HAP-1 (cell line): ENCODE measurements at regions of chr4 and their contacts with region 1.

Region 1: GRCh38 chr4:122922877-122923511 is 597 bp upstream of the NUDT6 start:
- DNase-seq: peak; percentile 92 to 93
- H3K4me3 ChIP-seq: peak overlapping the region; percentile 63
- H3K4me1 ChIP-seq: peaks cover 9% of the 10 kb centered on the region
- H3K27me3 ChIP-seq: no peaks in the 10 kb centered on the region

Region 2: GRCh38 chr4:122086338-122087065 is 836.5 kb before region 1 on chr4:
- in situ Hi-C with region 1: no loop called
- DNase-seq: no peak
- H3K4me3 ChIP-seq: no peak overlapping the region
- H3K4me1 ChIP-seq: peaks cover 6% of the 10 kb centered on the region
- H3K27me3 ChIP-seq: no peaks in the 10 kb centered on the region

Region 3: GRCh38 chr4:122602277-122603142 is 320.5 kb before region 1 on chr4:
- in situ Hi-C with region 1: loop called (anchors 10 kb)
- DNase-seq: peak; percentile 17 to 42
- H3K4me3 ChIP-seq: no peak overlapping the region
- H3K4me1 ChIP-seq: no peaks in the 10 kb centered on the region
- H3K27me3 ChIP-seq: peaks cover 7% of the 10 kb centered on the region; the same call in 1 of the 2 replicates

Region 4: GRCh38 chr4:122749704-122750454 is 173.1 kb before region 1 on chr4:
- in situ Hi-C with region 1: loop called (anchors 5 kb)
- DNase-seq: no peak
- H3K4me3 ChIP-seq: no peak overlapping the region
- H3K4me1 ChIP-seq: no peaks in the 10 kb centered on the region
- H3K27me3 ChIP-seq: no peaks in the 10 kb centered on the region